ENCODE measurements at regions of chr17 and their contacts with region 1.

Region 1: GRCh38 chr17:33178681-33179080 is 114.4 kb downstream of the ASIC2 start:
- DNase-seq: no peak
- ATAC-seq: no peak
- H3K4me3 ChIP-seq: no peak overlapping the region
- H3K27ac ChIP-seq: no peak overlapping the region
- H3K4me1 ChIP-seq: no peaks in the 10 kb centered on the region
- H3K27me3 ChIP-seq: peaks cover 0 to 21% (median 2%) of the 10 kb centered on the region in 3 donors
- CTCF ChIP-seq: no peak

Region 2: DNA sequence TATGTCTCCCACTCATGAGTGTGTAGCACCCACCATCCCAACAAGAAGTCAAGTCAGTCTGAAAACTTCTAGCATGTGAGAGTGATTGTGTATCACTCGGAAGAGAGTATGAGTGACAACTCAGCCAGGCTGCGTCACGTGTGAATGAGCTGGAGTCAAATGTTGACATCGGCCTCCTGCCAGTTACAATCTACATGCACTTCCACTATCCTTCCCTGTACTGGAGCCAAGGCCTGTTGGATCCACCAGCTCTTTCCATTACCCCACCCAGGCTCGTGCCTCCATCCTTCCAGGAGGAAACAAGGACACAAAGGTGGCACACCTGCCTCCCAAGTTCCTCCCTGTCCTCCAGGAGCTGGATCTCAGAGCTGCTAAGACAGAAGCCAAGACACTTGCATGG is 49.9 kb after region 1 on chr17:
- intact Hi-C with region 1: loop called in 1 of 2 experiments (anchors 2 kb)
- DNase-seq: no peak
- ATAC-seq: no peak
- H3K4me3 ChIP-seq: no peak overlapping the region
- H3K27ac ChIP-seq: no peak overlapping the region
- H3K4me1 ChIP-seq: no peaks in the 10 kb centered on the region
- H3K27me3 ChIP-seq: no peaks in the 10 kb centered on the region
- CTCF ChIP-seq: no peak

Region 3: GRCh38 chr17:33447090-33447489 is 268.4 kb after region 1 on chr17:
- intact Hi-C with region 1: no loop called
- DNase-seq: no peak
- ATAC-seq: no peak
- H3K4me3 ChIP-seq: no peak overlapping the region
- H3K27ac ChIP-seq: no peak overlapping the region
- H3K4me1 ChIP-seq: no peaks in the 10 kb centered on the region
- H3K27me3 ChIP-seq: no peaks in the 10 kb centered on the region
- CTCF ChIP-seq: no peak

Measured in psoas muscle (tissue), 8 donors.